Activated T-helper 2 cell treated with anti-CD3 and anti-CD28 coated beads, Interferon-gamma antibody, Interleukin-2, Interleukin-4, amounts not matched to agents 10 μg/mL and 5 μg/mL and 100 μg/mL, durations not matched to agents 14 hours and 24 hours and 36 hours (primary cell): ENCODE measurements at regions of chr5 and their contacts with region 1.

Region 1: DNA sequence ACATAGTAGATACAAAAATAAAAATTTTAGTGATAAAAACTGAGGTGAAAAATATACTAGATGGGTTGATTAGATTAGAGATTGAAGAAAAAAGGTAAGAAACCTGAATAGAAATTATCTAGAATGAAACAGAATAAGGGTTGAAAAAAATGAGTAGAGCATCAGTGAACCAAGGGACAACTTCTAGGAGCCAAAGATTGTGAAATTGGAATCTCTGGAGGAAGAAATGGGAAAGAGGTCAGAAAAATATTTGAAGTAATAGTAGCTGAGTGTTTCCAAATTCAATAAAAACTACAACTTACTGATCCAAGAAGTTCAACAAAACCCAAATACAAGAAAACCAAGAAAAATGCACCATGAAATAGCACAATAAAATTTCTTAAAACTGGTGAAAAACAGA is 116.6 kb upstream of the STARD4 start:
- DNase-seq: no peak
- H3K4me3 Mint-ChIP-seq: no peak overlapping the region
- H3K27ac Mint-ChIP-seq: no peak overlapping the region
- H3K4me1 Mint-ChIP-seq: peaks cover 17% of the 10 kb centered on the region
- H3K27me3 Mint-ChIP-seq: no peaks in the 10 kb centered on the region

Region 2: GRCh38 chr5:109936996-109937395 is 1691.9 kb before region 1 on chr5:
- intact Hi-C with region 1: no loop called
- DNase-seq: no peak
- H3K4me3 Mint-ChIP-seq: no peak overlapping the region
- H3K27ac Mint-ChIP-seq: no peak overlapping the region
- H3K4me1 Mint-ChIP-seq: peaks cover 8% of the 10 kb centered on the region
- H3K27me3 Mint-ChIP-seq: no peaks in the 10 kb centered on the region

Region 3: DNA sequence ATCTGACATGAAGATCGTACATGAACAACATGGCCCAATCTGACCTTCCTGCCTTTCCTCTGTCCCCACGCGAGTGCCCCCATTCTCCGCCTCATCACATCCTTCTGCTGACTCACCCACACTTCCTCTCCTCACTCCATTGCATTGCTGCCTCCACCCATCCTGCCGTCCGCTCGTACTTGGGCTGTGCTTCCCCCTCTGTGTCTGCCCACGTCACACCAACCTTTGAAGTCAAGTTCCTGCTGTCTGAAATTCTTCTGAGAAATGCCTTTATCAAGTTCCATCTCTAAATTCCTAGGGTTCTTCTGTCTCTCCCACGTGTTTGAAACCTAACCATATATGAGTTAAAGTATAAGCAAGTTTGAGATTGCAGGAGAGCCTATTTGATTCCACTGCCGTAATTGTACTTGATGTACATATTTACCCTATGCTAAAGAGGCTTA is 98.6 kb before region 1 on chr5:
- intact Hi-C with region 1: loop called (anchors 5 kb)
- DNase-seq: peak; percentile 80
- H3K4me3 Mint-ChIP-seq: peak overlapping the region; percentile 46
- H3K27ac Mint-ChIP-seq: peak overlapping the region; percentile 87
- H3K4me1 Mint-ChIP-seq: peaks cover 35% of the 10 kb centered on the region
- H3K27me3 Mint-ChIP-seq: no peaks in the 10 kb centered on the region

Region 4: DNA sequence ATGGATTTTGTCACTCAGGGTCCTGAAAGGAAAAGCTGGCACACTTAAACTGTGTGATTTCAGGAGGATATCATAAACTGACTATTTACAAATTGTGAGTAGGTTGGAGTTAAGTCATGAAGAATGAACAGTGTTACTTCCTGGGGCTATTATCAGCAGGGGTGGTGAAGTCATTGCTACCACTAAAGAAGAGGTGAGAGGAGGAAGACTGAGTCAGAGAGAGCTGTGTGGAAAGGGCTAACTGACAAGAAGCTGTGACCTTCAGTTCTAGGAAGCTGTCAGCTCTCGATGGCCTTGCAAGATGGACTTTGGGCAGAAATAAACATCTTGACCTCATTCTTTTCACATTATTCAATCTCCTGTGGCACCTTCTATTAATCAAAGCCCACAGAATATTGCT is 44.2 kb before region 1 on chr5:
- intact Hi-C with region 1: loop called (anchors 2 kb)
- DNase-seq: no peak
- H3K4me3 Mint-ChIP-seq: no peak overlapping the region
- H3K27ac Mint-ChIP-seq: peak overlapping the region; percentile 77
- H3K4me1 Mint-ChIP-seq: peaks cover 50% of the 10 kb centered on the region
- H3K27me3 Mint-ChIP-seq: no peaks in the 10 kb centered on the region

Region 5: GRCh38 chr5:111668477-111669414 is 39.8 kb after region 1 on chr5:
- intact Hi-C with region 1: loop called (anchors 5 kb)
- DNase-seq: no peak
- H3K4me3 Mint-ChIP-seq: no peak overlapping the region
- H3K27ac Mint-ChIP-seq: no peak overlapping the region
- H3K4me1 Mint-ChIP-seq: peaks cover 7% of the 10 kb centered on the region
- H3K27me3 Mint-ChIP-seq: peaks cover 2% of the 10 kb centered on the region